BJ (cell line): ENCODE measurements at regions of chr13 and their contacts with region 1.

Region 1: GRCh38 chr13:76917095-76917494 is 30.9 kb upstream of the KCTD12 start:
- DNase-seq: no peak
- H3K4me3 ChIP-seq: no peak overlapping the region
- H3K27me3 ChIP-seq: peaks cover under 1% of the 10 kb centered on the region; the same call in 1 of the 2 replicates
- CTCF ChIP-seq: no peak

Region 2: DNA sequence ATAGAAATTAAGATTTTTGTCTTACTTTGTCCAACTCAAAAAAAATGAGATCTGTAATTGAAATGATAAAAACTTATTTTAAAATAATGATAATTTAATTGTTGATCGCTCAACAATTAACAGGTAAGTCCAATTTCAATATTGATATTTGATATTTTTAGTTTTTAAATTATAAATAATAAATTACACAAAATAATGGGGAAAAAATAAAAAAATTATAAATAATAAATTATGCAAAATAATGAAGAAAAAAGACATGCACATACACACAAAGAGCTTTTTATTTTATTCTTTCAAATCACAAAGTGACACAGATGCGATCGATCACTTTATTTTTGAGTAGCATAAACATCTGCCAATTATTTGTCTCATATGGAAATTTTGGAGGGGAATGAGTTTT is 71.7 kb before region 1 on chr13:
- CTCF ChIA-PET with region 1: no interaction called
- POLR2A ChIA-PET with region 1: no interaction called
- DNase-seq: no peak
- H3K4me3 ChIP-seq: no peak overlapping the region
- H3K27me3 ChIP-seq: no peaks in the 10 kb centered on the region
- CTCF ChIP-seq: no peak

Region 3: GRCh38 chr13:76937281-76937820 is 20.3 kb after region 1 on chr13:
- CTCF ChIA-PET with region 1: interaction called, 5 read pairs
- POLR2A ChIA-PET with region 1: interaction called, 22 read pairs
- DNase-seq: peak; percentile 83
- H3K4me3 ChIP-seq: no peak overlapping the region
- H3K27me3 ChIP-seq: no peaks in the 10 kb centered on the region
- CTCF ChIP-seq: no peak